ENCODE measurements at regions of chr1 and their contacts with region 1.

Region 1: DNA sequence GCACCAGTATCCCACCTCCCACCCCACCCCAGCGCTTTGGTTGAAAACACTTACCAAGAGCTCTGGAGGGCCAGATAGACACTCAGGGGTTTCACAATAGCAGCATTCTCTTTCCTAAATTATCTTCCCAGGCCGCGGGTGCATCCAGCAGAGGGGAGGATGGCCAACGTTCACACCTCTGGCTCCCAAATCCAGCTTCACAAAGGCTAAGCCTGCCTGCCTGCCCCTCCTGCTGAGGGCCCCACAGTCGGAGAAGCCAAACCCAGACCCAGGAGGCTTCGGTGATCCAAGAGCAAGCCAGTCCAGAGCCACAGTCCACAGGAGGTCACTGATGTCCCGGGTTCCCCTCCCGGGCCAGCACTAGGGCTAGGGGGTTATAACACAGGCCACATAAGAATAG is 231.9 kb downstream of the TRABD2B start:
- DNase-seq: no peak
- ATAC-seq: peak; percentile 68

Region 2: GRCh38 chr1:47241114-47242113 is 523.8 kb before region 1 on chr1:
- intact Hi-C with region 1: no loop called
- DNase-seq: no peak
- ATAC-seq: no peak

Region 3: GRCh38 chr1:47986761-47987200 is 221.5 kb after region 1 on chr1:
- intact Hi-C with region 1: loop called (anchors 1 kb)
- DNase-seq: peak; percentile 78
- ATAC-seq: peak; percentile 75

Measured in Right ventricle myocardium inferior (tissue), 1 donor.